Activated CD8-positive, alpha-beta memory T cell treated with anti-CD3 and anti-CD28 coated beads, Interleukin-2, amount 10 ng/mL, durations not matched to agents 7 days and 5 days (primary cell): ENCODE measurements at regions of chr11 and their contacts with region 1.

Region 1: GRCh38 chr11:112555491-112556364 is 295.1 kb upstream of the PLET1 start:
- DNase-seq: peak; percentile 67
- ATAC-seq: peak; percentile 66
- H3K4me3 Mint-ChIP-seq: no peak overlapping the region
- H3K27ac Mint-ChIP-seq: no peak overlapping the region
- H3K4me1 Mint-ChIP-seq: peaks cover 2% of the 10 kb centered on the region
- H3K27me3 Mint-ChIP-seq: peaks cover 8% of the 10 kb centered on the region

Region 2: GRCh38 chr11:112289588-112290492 is 265.9 kb before region 1 on chr11:
- CTCF ChIA-PET with region 1: interaction called, 14 read pairs
- DNase-seq: peak; percentile 87
- ATAC-seq: peak; percentile 99
- H3K4me3 Mint-ChIP-seq: peak overlapping the region; percentile 71
- H3K27ac Mint-ChIP-seq: peak overlapping the region; percentile 71
- H3K4me1 Mint-ChIP-seq: peaks cover 24% of the 10 kb centered on the region
- H3K27me3 Mint-ChIP-seq: peaks cover 17% of the 10 kb centered on the region